ENCODE measurements at regions of chr1 and their contacts with region 1.

Region 1: GRCh38 chr1:41516168-41517061 is 31.9 kb upstream of the EDN2 start:
- DNase-seq: peak; percentile 94

Region 2: DNA sequence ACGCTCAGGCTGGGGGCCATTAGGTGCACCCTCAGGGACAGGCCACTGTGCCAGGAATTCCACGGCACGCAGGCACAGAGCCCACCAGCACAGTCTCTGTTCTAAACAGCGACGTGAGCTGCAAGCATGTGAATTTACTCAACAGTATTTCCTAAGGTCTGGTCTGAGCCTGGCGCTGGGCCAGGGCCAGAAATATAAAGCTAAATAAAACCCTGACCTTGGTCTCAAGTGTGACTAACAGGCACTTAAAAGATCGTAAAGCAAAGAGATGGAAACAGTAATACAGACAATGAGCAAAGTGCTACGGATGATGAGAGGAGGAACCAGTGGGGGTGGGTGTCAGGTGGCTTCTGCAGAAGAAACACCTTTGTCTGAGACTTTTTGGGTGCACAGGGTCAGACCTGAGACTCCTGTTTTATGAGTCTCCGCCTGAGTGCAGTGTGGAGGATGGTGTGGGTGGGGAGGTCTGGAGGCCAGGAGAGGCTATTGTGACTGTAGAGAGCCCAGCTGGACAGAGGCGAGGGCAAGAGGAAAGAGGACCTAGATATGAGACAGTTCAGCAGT is 21.5 kb after region 1 on chr1:
- intact Hi-C with region 1: loop called (anchors 2 kb)
- DNase-seq: peak; percentile 78

Region 3: DNA sequence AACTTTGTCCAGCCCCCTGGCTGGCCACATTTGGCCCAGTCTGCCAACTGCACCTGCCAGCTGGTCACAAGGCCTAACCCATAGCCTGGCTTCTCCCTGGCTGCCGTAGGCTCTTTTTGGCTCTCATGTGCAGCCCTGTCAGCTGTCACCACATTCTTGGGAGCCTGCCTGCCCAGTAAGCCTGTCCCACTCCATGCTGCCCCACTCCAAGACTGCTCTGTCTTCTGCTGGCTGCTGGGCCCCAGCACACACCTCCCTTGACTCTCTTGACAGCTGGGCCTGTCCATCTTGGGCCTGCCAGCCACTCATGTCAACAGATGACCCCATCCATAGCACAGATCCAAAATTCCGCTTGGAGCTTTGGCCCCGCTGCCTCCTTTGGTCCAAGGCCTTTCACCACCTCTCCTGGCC is 42.4 kb after region 1 on chr1:
- intact Hi-C with region 1: loop called (anchors 5 kb)
- DNase-seq: peak; percentile 86

Region 4: GRCh38 chr1:41783189-41783639 is 266.8 kb after region 1 on chr1:
- intact Hi-C with region 1: no loop called
- DNase-seq: no peak

Measured in cardiac septum (tissue), 1 donor.